Pancreas (tissue), 10 donors: ENCODE measurements at regions of chr17 and their contacts with region 1.

Region 1: DNA sequence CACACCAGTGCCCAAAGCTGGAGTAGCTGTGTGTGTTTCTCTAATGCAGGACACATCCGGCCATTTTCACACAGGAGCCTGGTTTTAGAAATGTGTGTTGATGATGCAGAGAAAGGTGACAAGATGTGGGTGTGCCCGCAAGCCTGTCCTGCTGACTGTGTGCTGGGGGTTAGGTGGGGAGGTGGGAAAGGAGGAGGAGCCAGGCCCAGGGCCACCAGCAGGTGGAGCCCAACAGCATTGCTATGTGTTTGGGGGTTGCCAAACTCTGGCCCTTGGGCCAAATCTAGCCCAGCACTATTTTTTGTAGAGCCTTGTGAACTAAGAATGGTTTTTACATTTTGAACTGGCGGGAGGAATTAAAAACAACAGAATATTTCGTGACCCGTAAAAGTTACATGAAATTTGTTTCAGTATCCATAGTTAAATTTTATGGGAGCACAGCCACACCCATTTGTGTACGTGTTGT is 61.7 kb upstream of the LGALS9 start:
- DNase-seq: peak in 3 of 6 donors; percentile 52 to 63 (median 60)
- ATAC-seq: peak; percentile 35 to 75 (median 70)
- H3K4me3 ChIP-seq: no peak overlapping the region
- H3K27ac ChIP-seq: peak overlapping the region in 2 of 4 donors; percentile 41 to 50
- H3K4me1 ChIP-seq: peaks cover 28 to 64% (median 35%) of the 10 kb centered on the region in 3 donors
- H3K27me3 ChIP-seq: no peaks in the 10 kb centered on the region
- CTCF ChIP-seq: peak in 3 of 4 donors; percentile 14 to 30 (median 27)

Region 2: DNA sequence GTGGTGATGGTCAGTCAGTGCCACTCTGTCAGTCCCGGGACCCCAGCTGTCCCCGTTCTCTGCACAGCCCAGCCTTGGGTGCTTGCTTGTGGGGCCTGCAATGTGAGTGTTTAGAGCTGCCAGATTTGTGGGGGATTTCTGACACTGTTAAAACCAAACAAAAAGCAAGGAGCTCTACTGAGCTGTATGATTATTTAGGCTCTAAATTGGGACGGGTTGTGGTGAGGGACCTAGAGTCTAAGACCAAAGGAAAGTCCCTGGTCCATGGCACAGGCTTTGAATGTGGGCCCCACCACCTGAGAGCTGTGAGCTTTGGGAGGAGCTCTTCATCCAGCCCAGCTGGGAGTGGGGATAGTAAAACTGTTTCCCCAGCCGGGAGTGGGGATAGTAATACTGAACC is 49.7 kb before region 1 on chr17:
- intact Hi-C with region 1: loop called in 1 of 3 experiments (anchors 10 kb)
- DNase-seq: no peak
- ATAC-seq: peak in 2 of 4 donors; percentile 3 to 8
- H3K4me3 ChIP-seq: no peak overlapping the region
- H3K27ac ChIP-seq: peak overlapping the region in 3 of 4 donors; percentile 2 to 80 (median 79)
- H3K4me1 ChIP-seq: peaks cover 19 to 65% (median 53%) of the 10 kb centered on the region in 3 donors
- H3K27me3 ChIP-seq: no peaks in the 10 kb centered on the region
- CTCF ChIP-seq: no peak

Region 3: GRCh38 chr17:27601069-27601975 is 32.0 kb after region 1 on chr17:
- intact Hi-C with region 1: no loop called
- DNase-seq: peak; percentile 72 to 90 (median 78)
- ATAC-seq: peak; percentile 47 to 80 (median 69)
- H3K4me3 ChIP-seq: no peak overlapping the region
- H3K27ac ChIP-seq: no peak overlapping the region
- H3K4me1 ChIP-seq: peaks cover 6 to 8% (median 8%) of the 10 kb centered on the region in 3 donors
- H3K27me3 ChIP-seq: no peaks in the 10 kb centered on the region
- CTCF ChIP-seq: peak; percentile 85 to 87 (median 86)